Left ventricle myocardium superior (tissue), 1 donor: ENCODE measurements at regions of chr4 and their contacts with region 1.

Region 1: GRCh38 chr4:123744664-123745290 is 348.2 kb downstream of the SPRY1 start:
- DNase-seq: peak; percentile 34
- ATAC-seq: peak; percentile 70

Region 2: GRCh38 chr4:123893011-123893981 is 148.5 kb after region 1 on chr4:
- intact Hi-C with region 1: loop called (anchors 10 kb)
- DNase-seq: peak; percentile 37
- ATAC-seq: peak; percentile 82